ENCODE measurements at regions of chr10 and their contacts with region 1.

Region 1: DNA sequence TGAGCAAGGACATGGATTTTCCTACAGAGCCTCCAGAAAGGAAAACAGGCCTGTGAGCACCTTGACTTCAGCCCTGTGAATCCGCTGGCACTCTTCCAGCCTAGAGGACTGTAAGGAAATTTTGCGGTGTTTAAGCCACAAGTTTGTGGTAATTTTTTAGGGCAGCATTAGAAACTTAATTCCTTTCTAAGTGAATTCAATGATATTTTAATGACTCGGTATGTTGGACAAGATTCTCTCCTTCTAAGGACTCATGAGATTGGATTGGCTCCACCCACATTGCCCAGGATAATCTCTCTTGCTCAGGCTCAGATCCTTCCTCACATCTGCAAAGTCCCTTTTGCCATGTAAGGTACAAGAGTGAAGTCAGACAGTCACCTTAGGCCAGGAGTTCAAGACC is 4.5 kb downstream of the LYZL2 start:
- DNase-seq: peak; percentile 60
- ATAC-seq: peak; percentile 52; the same call in 1 of the 2 replicates
- H3K4me3 ChIP-seq: no peak overlapping the region
- H3K27ac ChIP-seq: no peak overlapping the region
- H3K4me1 ChIP-seq: no peaks in the 10 kb centered on the region
- H3K27me3 ChIP-seq: no peaks in the 10 kb centered on the region
- CTCF ChIP-seq: no peak
- POLR2A ChIP-seq: no peak
- RAD21 ChIP-seq: no peak

Region 2: GRCh38 chr10:29297678-29298077 is 1327.4 kb before region 1 on chr10:
- CTCF ChIA-PET with region 1: no interaction called
- POLR2A ChIA-PET with region 1: no interaction called
- dilution Hi-C with region 1: no loop called
- in situ Hi-C with region 1: loop called (anchors 10 kb)
- intact Hi-C with region 1: no loop called
- DNase-seq: no peak
- ATAC-seq: no peak
- H3K4me3 ChIP-seq: no peak overlapping the region
- H3K27ac ChIP-seq: no peak overlapping the region
- H3K4me1 ChIP-seq: no peaks in the 10 kb centered on the region
- H3K27me3 ChIP-seq: peaks cover 10% of the 10 kb centered on the region; the same call in 1 of the 2 replicates
- CTCF ChIP-seq: no peak
- POLR2A ChIP-seq: no peak
- RAD21 ChIP-seq: no peak